ENCODE measurements at regions of chrX and their contacts with region 1.

Region 1: DNA sequence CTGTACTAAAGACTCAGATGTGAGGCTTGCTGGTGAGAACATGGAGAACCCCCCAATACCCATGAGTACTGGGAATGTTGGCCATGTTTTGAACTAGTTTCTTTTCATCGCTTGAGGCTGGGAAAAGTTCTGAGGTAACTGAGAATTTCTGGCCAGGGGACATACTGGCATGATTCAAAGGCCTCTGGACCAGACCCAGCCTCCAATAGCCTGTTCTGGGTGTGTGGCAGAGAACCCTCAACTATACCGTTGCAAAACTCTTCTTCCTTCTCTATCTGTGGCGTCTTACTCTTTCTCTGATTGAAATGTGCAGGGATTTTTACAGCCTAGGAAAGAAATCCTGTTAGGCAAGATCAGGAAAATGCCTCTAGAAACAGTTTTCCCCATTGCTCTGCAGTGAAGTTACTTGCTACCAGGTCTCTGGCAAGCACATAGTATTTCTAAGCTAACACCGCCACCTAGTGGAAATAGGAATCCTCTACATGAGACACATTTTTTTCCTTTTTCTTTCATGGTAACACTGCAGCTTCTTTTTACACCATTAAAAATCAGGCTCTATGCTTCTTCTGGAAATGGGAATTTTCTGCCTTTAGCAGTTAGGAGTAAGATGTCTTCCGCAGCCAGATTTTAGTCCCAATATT is 170.7 kb upstream of the ZCCHC13 start:
- DNase-seq: peak; percentile 39 to 56 (median 46)
- ATAC-seq: peak; percentile 87
- H3K4me3 ChIP-seq: no peak overlapping the region
- H3K27ac ChIP-seq: no peak overlapping the region
- H3K4me1 ChIP-seq: no peaks in the 10 kb centered on the region
- H3K27me3 ChIP-seq: no peaks in the 10 kb centered on the region
- CTCF ChIP-seq: peak; percentile 58 to 77 (median 59)
- EP300 ChIP-seq: no peak
- POLR2A ChIP-seq: no peak
- RAD21 ChIP-seq: peak; percentile 70 to 87

Region 2: GRCh38 chrX:73850124-73851013 is 282.9 kb before region 1 on chrX:
- CTCF ChIA-PET with region 1: interaction called, 6 read pairs
- POLR2A ChIA-PET with region 1: no interaction called
- in situ Hi-C with region 1: loop called (anchors 5 kb)
- intact Hi-C with region 1: loop called (anchors 1 kb)
- DNase-seq: peak; percentile 9 to 46 (median 22)
- ATAC-seq: peak; percentile 22
- H3K4me3 ChIP-seq: peak overlapping the region; percentile 63
- H3K27ac ChIP-seq: peak overlapping the region; percentile 66; the same call in 2 of the 3 replicates
- H3K4me1 ChIP-seq: no peaks in the 10 kb centered on the region
- H3K27me3 ChIP-seq: no peaks in the 10 kb centered on the region
- CTCF ChIP-seq: peak; percentile 7 to 26 (median 9); a peak in 2 of 6 replicates
- EP300 ChIP-seq: no peak
- POLR2A ChIP-seq: no peak
- RAD21 ChIP-seq: no peak

Region 3: GRCh38 chrX:74015379-74016019 is 117.8 kb before region 1 on chrX:
- CTCF ChIA-PET with region 1: no interaction called
- POLR2A ChIA-PET with region 1: no interaction called
- in situ Hi-C with region 1: no loop called
- intact Hi-C with region 1: loop called (anchors 2 kb)
- DNase-seq: peak; percentile 53 to 80 (median 60)
- ATAC-seq: peak; percentile 91
- H3K4me3 ChIP-seq: no peak overlapping the region
- H3K27ac ChIP-seq: no peak overlapping the region
- H3K4me1 ChIP-seq: no peaks in the 10 kb centered on the region
- H3K27me3 ChIP-seq: no peaks in the 10 kb centered on the region
- CTCF ChIP-seq: peak; percentile 70 to 75 (median 73)
- EP300 ChIP-seq: no peak
- POLR2A ChIP-seq: no peak
- RAD21 ChIP-seq: peak; percentile 30 to 83; a peak in 3 of 4 replicates

Region 4: GRCh38 chrX:74251006-74251930 is 118.0 kb after region 1 on chrX:
- CTCF ChIA-PET with region 1: no interaction called
- POLR2A ChIA-PET with region 1: no interaction called
- in situ Hi-C with region 1: no loop called
- intact Hi-C with region 1: no loop called
- DNase-seq: peak in 2 of 4 experiments; percentile 6 to 27
- ATAC-seq: peak; percentile 60
- H3K4me3 ChIP-seq: no peak overlapping the region
- H3K27ac ChIP-seq: peak overlapping the region; percentile 50; the same call in 1 of the 3 replicates
- H3K4me1 ChIP-seq: peaks cover 4 to 14% of the 10 kb centered on the region in 2 experiments; a peak in 3 of 5 replicates
- H3K27me3 ChIP-seq: no peaks in the 10 kb centered on the region
- CTCF ChIP-seq: no peak
- EP300 ChIP-seq: no peak
- POLR2A ChIP-seq: no peak
- RAD21 ChIP-seq: no peak

Region 5: GRCh38 chrX:74343343-74344279 is 210.3 kb after region 1 on chrX:
- CTCF ChIA-PET with region 1: no interaction called
- POLR2A ChIA-PET with region 1: no interaction called
- in situ Hi-C with region 1: no loop called
- intact Hi-C with region 1: loop called (anchors 10 kb)
- DNase-seq: peak; percentile 24 to 78 (median 40)
- ATAC-seq: peak; percentile 95
- H3K4me3 ChIP-seq: no peak overlapping the region
- H3K27ac ChIP-seq: no peak overlapping the region
- H3K4me1 ChIP-seq: peaks cover 0 to 4% of the 10 kb centered on the region in 2 experiments; a peak in 1 of 5 replicates
- H3K27me3 ChIP-seq: no peaks in the 10 kb centered on the region
- CTCF ChIP-seq: peak; percentile 52 to 64 (median 63); a peak in 5 of 6 replicates
- EP300 ChIP-seq: no peak
- POLR2A ChIP-seq: no peak
- RAD21 ChIP-seq: peak; percentile 48 to 75; a peak in 3 of 4 replicates